ENCODE measurements at regions of chr14 and their contacts with region 1.

Region 1: GRCh38 chr14:96053600-96054381 is 14.6 kb downstream of the C14orf132 start:
- DNase-seq: no peak
- H3K4me3 Mint-ChIP-seq: no peak overlapping the region
- H3K27ac Mint-ChIP-seq: no peak overlapping the region
- H3K4me1 Mint-ChIP-seq: no peaks in the 10 kb centered on the region
- H3K27me3 Mint-ChIP-seq: peaks cover 37% of the 10 kb centered on the region
- CTCF ChIP-seq: no peak

Region 2: DNA sequence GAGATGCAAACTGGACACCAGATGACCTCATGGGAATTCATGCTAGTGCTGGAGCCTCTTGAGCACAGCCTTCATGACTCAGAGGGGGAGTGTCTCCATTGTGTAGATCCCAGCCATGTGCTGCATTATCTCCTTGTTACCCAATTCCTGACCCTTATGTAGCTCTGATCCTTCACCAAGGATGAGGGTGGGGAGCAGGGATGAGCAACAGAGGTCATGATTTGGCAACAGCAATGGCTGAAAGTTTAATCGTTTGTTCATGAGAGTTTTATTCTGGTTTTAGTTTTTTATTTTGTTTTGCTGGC is 192.7 kb after region 1 on chr14:
- CTCF ChIA-PET with region 1: no interaction called
- intact Hi-C with region 1: no loop called
- DNase-seq: no peak
- H3K4me3 Mint-ChIP-seq: no peak overlapping the region
- H3K27ac Mint-ChIP-seq: no peak overlapping the region
- H3K4me1 Mint-ChIP-seq: no peaks in the 10 kb centered on the region
- H3K27me3 Mint-ChIP-seq: peaks cover 20% of the 10 kb centered on the region
- CTCF ChIP-seq: no peak

Region 3: GRCh38 chr14:96275177-96276112 is 221.7 kb after region 1 on chr14:
- CTCF ChIA-PET with region 1: no interaction called
- intact Hi-C with region 1: loop called (anchors 5 kb)
- DNase-seq: peak; percentile 82
- H3K4me3 Mint-ChIP-seq: no peak overlapping the region
- H3K27ac Mint-ChIP-seq: no peak overlapping the region
- H3K4me1 Mint-ChIP-seq: peaks cover 7% of the 10 kb centered on the region
- H3K27me3 Mint-ChIP-seq: no peaks in the 10 kb centered on the region
- CTCF ChIP-seq: peak; percentile 91

Region 4: GRCh38 chr14:96324219-96324618 is 270.4 kb after region 1 on chr14:
- CTCF ChIA-PET with region 1: no interaction called
- intact Hi-C with region 1: no loop called
- DNase-seq: no peak
- H3K4me3 Mint-ChIP-seq: no peak overlapping the region
- H3K27ac Mint-ChIP-seq: no peak overlapping the region
- H3K4me1 Mint-ChIP-seq: no peaks in the 10 kb centered on the region
- H3K27me3 Mint-ChIP-seq: no peaks in the 10 kb centered on the region
- CTCF ChIP-seq: no peak